ENCODE measurements at regions of chr7 and their contacts with region 1.

Region 1: DNA sequence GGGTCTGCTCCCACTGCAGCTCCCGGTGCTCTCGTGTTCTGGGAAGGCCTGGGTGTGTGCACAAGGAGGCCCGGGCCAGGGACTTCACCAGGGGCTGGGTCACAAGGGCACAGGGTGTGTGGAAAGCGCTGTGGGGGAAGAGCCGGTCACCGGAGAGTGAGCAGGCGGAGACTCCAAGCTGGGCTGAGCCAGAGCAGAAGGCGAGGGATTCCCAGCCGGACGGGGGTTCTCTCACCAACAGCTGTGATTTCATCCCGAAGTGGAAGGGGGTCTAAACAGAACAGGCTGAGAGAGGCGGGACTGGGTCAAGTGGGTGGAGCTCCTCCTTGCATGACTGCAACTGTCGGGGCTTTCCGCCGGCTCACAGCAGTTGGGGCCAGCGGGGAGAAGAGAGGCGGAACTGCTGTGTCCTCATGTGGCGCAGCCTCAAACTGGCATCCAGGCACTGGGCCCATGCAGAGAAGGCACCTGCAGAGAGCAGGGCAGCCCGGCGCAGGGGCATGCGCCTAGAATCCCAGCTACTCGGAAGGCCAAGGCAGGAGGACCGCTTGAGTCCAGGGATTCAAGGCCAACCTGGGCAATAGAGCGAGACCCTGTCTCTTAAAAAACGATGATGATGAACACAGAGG is 7.6 kb upstream of the ORAI2 start:
- DNase-seq: no peak
- H3K4me3 ChIP-seq: no peak overlapping the region
- H3K27ac ChIP-seq: no peak overlapping the region
- H3K4me1 ChIP-seq: peaks cover 0 to 14% (median 1%) of the 10 kb centered on the region in 4 experiments; a peak in 2 of 7 replicates
- H3K27me3 ChIP-seq: no peaks in the 10 kb centered on the region
- CTCF ChIP-seq: no peak
- EP300 ChIP-seq: no peak
- POLR2A ChIP-seq: no peak
- RAD21 ChIP-seq: no peak

Region 2: GRCh38 chr7:102404005-102404861 is 21.5 kb before region 1 on chr7:
- CTCF ChIA-PET with region 1: interaction called, 12 read pairs
- POLR2A ChIA-PET with region 1: interaction called, 3 read pairs
- DNase-seq: peak in 1 of 2 experiments; percentile 55
- H3K4me3 ChIP-seq: no peak overlapping the region
- H3K27ac ChIP-seq: no peak overlapping the region
- H3K4me1 ChIP-seq: no peaks in the 10 kb centered on the region
- H3K27me3 ChIP-seq: no peaks in the 10 kb centered on the region
- CTCF ChIP-seq: peak; percentile 66 to 90 (median 71)
- EP300 ChIP-seq: no peak
- POLR2A ChIP-seq: no peak
- RAD21 ChIP-seq: peak; percentile 69 to 70

Region 3: GRCh38 chr7:102412548-102412947 is 13.2 kb before region 1 on chr7:
- CTCF ChIA-PET with region 1: interaction called, 11 read pairs
- POLR2A ChIA-PET with region 1: interaction called, 6 read pairs
- DNase-seq: peak in 1 of 2 experiments; percentile 76
- H3K4me3 ChIP-seq: no peak overlapping the region
- H3K27ac ChIP-seq: no peak overlapping the region
- H3K4me1 ChIP-seq: no peaks in the 10 kb centered on the region
- H3K27me3 ChIP-seq: no peaks in the 10 kb centered on the region
- CTCF ChIP-seq: peak; percentile 55 to 58 (median 57)
- EP300 ChIP-seq: no peak
- POLR2A ChIP-seq: no peak
- RAD21 ChIP-seq: peak; percentile 65 to 69

Region 4: GRCh38 chr7:102440078-102440795 is 14.5 kb after region 1 on chr7:
- CTCF ChIA-PET with region 1: no interaction called
- POLR2A ChIA-PET with region 1: interaction called, 49 read pairs
- DNase-seq: peak in 1 of 2 experiments; percentile 53
- H3K4me3 ChIP-seq: no peak overlapping the region
- H3K27ac ChIP-seq: no peak overlapping the region
- H3K4me1 ChIP-seq: peaks cover 0 to 9% (median 0%) of the 10 kb centered on the region in 4 experiments; a peak in 2 of 7 replicates
- H3K27me3 ChIP-seq: no peaks in the 10 kb centered on the region
- CTCF ChIP-seq: no peak
- EP300 ChIP-seq: no peak
- POLR2A ChIP-seq: no peak
- RAD21 ChIP-seq: no peak